Naive thymus-derived CD4-positive, alpha-beta T cell (primary cell): ENCODE measurements at regions of chr9 and their contacts with region 1.

Region 1: DNA sequence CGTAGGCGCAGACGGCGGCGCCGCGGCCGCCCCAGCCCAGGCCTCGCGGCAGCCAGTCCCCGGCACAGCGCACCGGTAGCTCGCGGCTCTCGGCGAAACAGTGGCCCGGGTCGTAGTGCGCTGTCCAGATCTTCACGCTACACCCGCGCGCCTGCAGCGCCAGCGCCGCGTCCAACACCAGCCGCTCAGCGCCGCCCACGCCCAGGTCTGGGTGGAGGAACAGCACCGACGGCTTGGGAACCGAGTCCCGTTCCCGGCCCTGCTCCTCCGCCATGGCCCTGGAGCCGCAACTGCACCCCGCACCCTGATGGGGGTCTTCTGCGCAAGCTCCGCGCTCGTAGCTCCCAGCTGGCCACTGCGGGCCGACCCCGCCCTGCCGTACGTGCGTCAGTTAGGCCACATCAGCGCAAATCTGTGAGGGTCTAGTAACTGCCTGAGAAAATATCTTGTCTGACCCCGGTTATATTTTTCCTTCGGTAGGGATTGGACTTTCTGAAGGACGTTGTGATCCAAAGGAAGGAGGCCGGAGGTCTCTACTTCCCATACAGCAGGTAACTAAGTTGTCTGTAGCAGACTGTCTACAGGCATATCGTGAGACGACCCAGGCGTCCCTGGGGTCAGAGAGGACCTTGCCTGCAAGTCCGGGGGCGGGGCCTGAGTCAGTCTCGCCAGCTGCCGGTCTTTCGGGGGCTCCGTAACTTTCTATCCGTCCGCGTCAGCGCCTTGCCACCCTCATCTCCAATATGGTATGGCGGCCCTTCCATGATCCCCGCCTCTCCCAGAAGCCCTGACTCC is at the starts of genes ALG2 and SEC61B:
- DNase-seq: peak; percentile 86 to 94 (median 91)
- ATAC-seq: peak; percentile 93
- H3K4me3 ChIP-seq: peak within 1 kb of the TSS; percentile 90
- H3K4me3 Mint-ChIP-seq: peak within 1 kb of the TSS; percentile 92 to 100 (median 99)
- H3K27ac ChIP-seq: peak within 1 kb of the TSS; percentile 86
- H3K27ac Mint-ChIP-seq: peak within 1 kb of the TSS; percentile 99 to 100 (median 100)
- H3K4me1 ChIP-seq: peaks cover 21 to 29% of the 10 kb centered on the region in 2 donors
- H3K4me1 Mint-ChIP-seq: peaks cover 48 to 91% (median 81%) of the 10 kb centered on the region in 7 donors
- H3K27me3 ChIP-seq: no peaks in the 10 kb centered on the region
- H3K27me3 Mint-ChIP-seq: no peaks in the 10 kb centered on the region
- total RNA-seq, gene ALG2: 13.9 to 33.7 (median 25.2) TPM
- total RNA-seq, gene SEC61B: 50.4 to 165 (median 54.6) TPM

Region 2: GRCh38 chr9:98807070-98807810 is 414.6 kb before region 1 on chr9 and contains the start of gene GALNT12:
- CTCF ChIA-PET with region 1: no interaction called
- POLR2A ChIA-PET with region 1: no interaction called
- intact Hi-C with region 1: loop called in 1 of 2 experiments (anchors 5 kb)
- DNase-seq: peak; percentile 31 to 60 (median 48)
- ATAC-seq: peak; percentile 87
- H3K4me3 ChIP-seq: peak within 1 kb of the TSS; percentile 56
- H3K4me3 Mint-ChIP-seq: peak within 1 kb of the TSS; percentile 80 to 95 (median 92)
- H3K27ac ChIP-seq: peak within 1 kb of the TSS; percentile 12
- H3K27ac Mint-ChIP-seq: peak within 1 kb of the TSS; percentile 7 to 91 (median 71)
- H3K4me1 ChIP-seq: peaks cover 11 to 16% of the 10 kb centered on the region in 2 donors
- H3K4me1 Mint-ChIP-seq: peaks cover 15 to 42% (median 37%) of the 10 kb centered on the region in 7 donors
- H3K27me3 ChIP-seq: no peaks in the 10 kb centered on the region
- H3K27me3 Mint-ChIP-seq: peaks cover 0 to 52% (median 0%) of the 10 kb centered on the region in 5 donors
- total RNA-seq, gene GALNT12: 6.2 to 14.3 (median 11.4) TPM

Region 3: GRCh38 chr9:99104459-99105151 is 117.2 kb before region 1 on chr9 and contains the start of gene TGFBR1:
- CTCF ChIA-PET with region 1: no interaction called
- POLR2A ChIA-PET with region 1: no interaction called
- intact Hi-C with region 1: loop called in 1 of 2 experiments (anchors 1 kb)
- DNase-seq: peak; percentile 87 to 98 (median 89)
- ATAC-seq: peak; percentile 91
- H3K4me3 ChIP-seq: peak within 1 kb of the TSS; percentile 73
- H3K4me3 Mint-ChIP-seq: peak within 1 kb of the TSS; percentile 90 to 97 (median 94)
- H3K27ac ChIP-seq: peak within 1 kb of the TSS; percentile 74
- H3K27ac Mint-ChIP-seq: peak within 1 kb of the TSS; percentile 78 to 99 (median 95)
- H3K4me1 ChIP-seq: peaks cover 43 to 49% of the 10 kb centered on the region in 2 donors
- H3K4me1 Mint-ChIP-seq: peaks cover 36 to 65% (median 59%) of the 10 kb centered on the region in 7 donors
- H3K27me3 ChIP-seq: no peaks in the 10 kb centered on the region
- H3K27me3 Mint-ChIP-seq: no peaks in the 10 kb centered on the region
- total RNA-seq, gene TGFBR1: 20.6 to 95.5 (median 29.5) TPM

Region 4: DNA sequence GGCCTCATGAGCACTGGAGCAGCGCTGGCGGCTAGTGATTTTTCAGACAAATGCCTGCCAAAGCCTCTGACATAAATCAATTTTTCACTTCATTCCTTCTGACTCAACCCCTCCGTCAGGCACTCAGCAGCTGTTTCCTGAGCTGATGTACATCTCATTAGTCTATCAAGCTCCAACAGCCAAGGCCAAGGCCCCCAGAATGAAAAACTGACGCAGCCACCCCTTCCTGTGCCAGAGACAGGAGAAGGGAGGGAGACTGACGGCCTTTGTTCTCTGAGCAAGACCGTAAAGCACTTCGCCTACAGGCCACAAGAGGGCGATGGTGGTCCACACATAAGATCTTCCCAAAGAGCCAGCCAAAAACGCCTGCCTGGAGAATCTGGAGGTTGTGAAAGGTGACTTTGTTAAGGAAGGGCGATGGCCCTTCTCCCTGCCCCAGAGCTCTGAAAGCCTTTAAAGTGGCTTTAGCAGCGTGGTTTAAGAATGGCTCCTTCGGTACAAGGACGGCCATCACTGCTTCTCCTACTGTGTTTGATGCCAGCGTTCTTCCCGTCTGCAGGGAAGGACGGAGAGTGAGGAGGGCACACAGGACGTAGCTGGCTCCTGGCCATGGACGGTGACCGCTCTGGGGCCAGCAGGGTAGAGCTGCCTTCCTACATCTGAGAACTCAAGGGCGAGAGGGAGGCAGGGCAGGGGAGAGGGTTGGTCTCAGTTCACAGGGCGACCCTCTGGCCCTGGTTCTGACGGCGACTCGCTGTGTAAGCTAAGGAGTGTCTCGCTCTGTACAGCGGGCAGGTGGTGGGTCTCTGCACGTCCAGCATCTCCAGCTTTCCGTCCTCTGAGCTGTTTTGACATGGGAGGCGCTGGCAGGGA is 37.1 kb before region 1 on chr9:
- CTCF ChIA-PET with region 1: interaction called, 3 read pairs
- POLR2A ChIA-PET with region 1: interaction called, 3 read pairs
- intact Hi-C with region 1: loop called (anchors 1 to 2 kb)
- DNase-seq: peak; percentile 50 to 75 (median 72)
- ATAC-seq: peak; percentile 91
- H3K4me3 ChIP-seq: no peak overlapping the region
- H3K4me3 Mint-ChIP-seq: peak overlapping the region in 7 of 10 donors; percentile 43 to 73 (median 50)
- H3K27ac ChIP-seq: no peak overlapping the region
- H3K27ac Mint-ChIP-seq: peak overlapping the region in 4 of 9 donors; percentile 40 to 69 (median 52)
- H3K4me1 ChIP-seq: peaks cover 0 to 3% of the 10 kb centered on the region in 2 donors
- H3K4me1 Mint-ChIP-seq: peaks cover 0 to 43% (median 19%) of the 10 kb centered on the region in 7 donors
- H3K27me3 ChIP-seq: peaks cover 0 to 3% of the 10 kb centered on the region in 2 donors
- H3K27me3 Mint-ChIP-seq: peaks cover 0 to 18% (median 7%) of the 10 kb centered on the region in 5 donors

Region 5: GRCh38 chr9:99259231-99259918 is 37.6 kb after region 1 on chr9:
- CTCF ChIA-PET with region 1: no interaction called
- POLR2A ChIA-PET with region 1: interaction called, 8 read pairs
- intact Hi-C with region 1: loop called in 1 of 2 experiments (anchors 1 kb)
- DNase-seq: peak; percentile 17 to 52 (median 45)
- ATAC-seq: peak; percentile 85
- H3K4me3 ChIP-seq: peak overlapping the region; percentile 5
- H3K4me3 Mint-ChIP-seq: peak overlapping the region; percentile 19 to 77 (median 48)
- H3K27ac ChIP-seq: no peak overlapping the region
- H3K27ac Mint-ChIP-seq: peak overlapping the region; percentile 1 to 84 (median 58)
- H3K4me1 ChIP-seq: peaks cover 0 to 8% of the 10 kb centered on the region in 2 donors
- H3K4me1 Mint-ChIP-seq: peaks cover 1 to 19% (median 6%) of the 10 kb centered on the region in 7 donors
- H3K27me3 ChIP-seq: no peaks in the 10 kb centered on the region
- H3K27me3 Mint-ChIP-seq: peaks cover 0 to 8% (median 0%) of the 10 kb centered on the region in 5 donors

Region 6: DNA sequence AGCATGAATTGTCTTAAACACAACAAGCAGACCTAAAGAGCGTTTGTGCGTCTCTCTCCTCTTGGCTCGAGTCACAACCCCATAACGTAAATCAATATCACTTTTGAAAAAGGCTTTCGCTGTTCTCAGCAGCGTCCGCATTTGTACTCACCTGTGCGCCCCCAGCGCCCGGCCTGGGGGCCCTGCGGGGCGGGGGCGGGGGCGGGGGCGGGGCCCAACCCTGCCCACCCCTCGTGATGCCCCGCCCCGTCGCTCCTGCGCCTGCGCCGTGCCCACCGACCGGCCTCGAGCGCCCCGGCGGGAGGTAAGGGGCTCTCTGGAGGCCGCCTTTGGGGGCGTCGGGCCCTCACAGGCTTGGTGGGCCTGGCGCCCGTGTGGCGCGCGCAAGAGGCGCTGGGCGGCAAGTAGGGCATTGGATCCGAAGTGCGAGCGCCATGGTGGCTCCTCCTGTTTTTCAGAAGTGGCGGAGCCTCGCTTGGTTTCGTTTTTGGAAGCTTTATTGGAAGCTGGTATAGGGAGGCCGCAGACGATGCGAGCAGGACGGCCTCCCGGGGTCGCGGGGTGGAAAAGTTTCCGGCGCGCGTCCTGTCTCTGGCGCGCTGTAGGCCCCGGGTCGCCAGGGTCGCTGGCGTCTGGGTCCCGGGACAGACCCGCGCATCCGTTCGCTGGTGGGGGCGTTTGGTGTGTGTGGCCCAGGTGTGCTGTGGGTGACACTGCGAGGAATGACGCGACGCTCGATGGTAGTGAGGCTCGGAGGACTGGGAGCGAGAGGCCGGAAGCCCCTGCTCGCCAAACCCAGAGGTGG is 684.8 kb after region 1 on chr9 and contains the start of gene STX17:
- CTCF ChIA-PET with region 1: no interaction called
- POLR2A ChIA-PET with region 1: no interaction called
- intact Hi-C with region 1: loop called (anchors 2 to 5 kb)
- DNase-seq: peak; percentile 78 to 94 (median 88)
- ATAC-seq: peak; percentile 90
- H3K4me3 ChIP-seq: peak within 1 kb of the TSS; percentile 96
- H3K4me3 Mint-ChIP-seq: peak within 1 kb of the TSS; percentile 92 to 99 (median 97)
- H3K27ac ChIP-seq: peak within 1 kb of the TSS; percentile 99
- H3K27ac Mint-ChIP-seq: peak within 1 kb of the TSS; percentile 96 to 100 (median 99)
- H3K4me1 ChIP-seq: peaks cover 14 to 17% of the 10 kb centered on the region in 2 donors
- H3K4me1 Mint-ChIP-seq: peaks cover 29 to 46% (median 40%) of the 10 kb centered on the region in 7 donors
- H3K27me3 ChIP-seq: no peaks in the 10 kb centered on the region
- H3K27me3 Mint-ChIP-seq: peaks cover 0 to 14% (median 7%) of the 10 kb centered on the region in 5 donors
- total RNA-seq, gene STX17: 34.2 to 63.2 (median 51.2) TPM

Region 7: GRCh38 chr9:100352727-100353505 is 1131.1 kb after region 1 on chr9 and contains the start of gene TEX10:
- CTCF ChIA-PET with region 1: no interaction called
- POLR2A ChIA-PET with region 1: no interaction called
- intact Hi-C with region 1: loop called (anchors 2 to 5 kb)
- DNase-seq: peak; percentile 80 to 94 (median 87)
- ATAC-seq: peak; percentile 96
- H3K4me3 ChIP-seq: peak within 1 kb of the TSS; percentile 79
- H3K4me3 Mint-ChIP-seq: peak within 1 kb of the TSS; percentile 87 to 99 (median 94)
- H3K27ac ChIP-seq: peak within 1 kb of the TSS; percentile 82
- H3K27ac Mint-ChIP-seq: peak within 1 kb of the TSS; percentile 77 to 94 (median 86)
- H3K4me1 ChIP-seq: peaks cover 8 to 22% of the 10 kb centered on the region in 2 donors
- H3K4me1 Mint-ChIP-seq: peaks cover 32 to 62% (median 53%) of the 10 kb centered on the region in 7 donors
- H3K27me3 ChIP-seq: no peaks in the 10 kb centered on the region
- H3K27me3 Mint-ChIP-seq: no peaks in the 10 kb centered on the region
- total RNA-seq, gene TEX10: 11.0 to 24.6 (median 18.2) TPM